PC-9 (cell line): ENCODE measurements at regions of chr22 and their contacts with region 1.

Region 1: GRCh38 chr22:41746567-41747400 is 47.5 kb downstream of the MEI1 start:
- DNase-seq: peak; percentile 75 to 88
- H3K4me3 ChIP-seq: no peak overlapping the region
- H3K27ac ChIP-seq: no peak overlapping the region
- H3K4me1 ChIP-seq: no peaks in the 10 kb centered on the region
- H3K27me3 ChIP-seq: no peaks in the 10 kb centered on the region
- CTCF ChIP-seq: peak; percentile 91

Region 2: GRCh38 chr22:41302021-41302767 is 444.6 kb before region 1 on chr22:
- CTCF ChIA-PET with region 1: no interaction called
- POLR2A ChIA-PET with region 1: no interaction called
- intact Hi-C with region 1: no loop called
- DNase-seq: no peak
- H3K4me3 ChIP-seq: peak overlapping the region; percentile 99
- H3K27ac ChIP-seq: peak overlapping the region; percentile 1; the same call in 1 of the 2 replicates
- H3K4me1 ChIP-seq: peaks cover 37% of the 10 kb centered on the region
- H3K27me3 ChIP-seq: no peaks in the 10 kb centered on the region
- CTCF ChIP-seq: no peak

Region 3: DNA sequence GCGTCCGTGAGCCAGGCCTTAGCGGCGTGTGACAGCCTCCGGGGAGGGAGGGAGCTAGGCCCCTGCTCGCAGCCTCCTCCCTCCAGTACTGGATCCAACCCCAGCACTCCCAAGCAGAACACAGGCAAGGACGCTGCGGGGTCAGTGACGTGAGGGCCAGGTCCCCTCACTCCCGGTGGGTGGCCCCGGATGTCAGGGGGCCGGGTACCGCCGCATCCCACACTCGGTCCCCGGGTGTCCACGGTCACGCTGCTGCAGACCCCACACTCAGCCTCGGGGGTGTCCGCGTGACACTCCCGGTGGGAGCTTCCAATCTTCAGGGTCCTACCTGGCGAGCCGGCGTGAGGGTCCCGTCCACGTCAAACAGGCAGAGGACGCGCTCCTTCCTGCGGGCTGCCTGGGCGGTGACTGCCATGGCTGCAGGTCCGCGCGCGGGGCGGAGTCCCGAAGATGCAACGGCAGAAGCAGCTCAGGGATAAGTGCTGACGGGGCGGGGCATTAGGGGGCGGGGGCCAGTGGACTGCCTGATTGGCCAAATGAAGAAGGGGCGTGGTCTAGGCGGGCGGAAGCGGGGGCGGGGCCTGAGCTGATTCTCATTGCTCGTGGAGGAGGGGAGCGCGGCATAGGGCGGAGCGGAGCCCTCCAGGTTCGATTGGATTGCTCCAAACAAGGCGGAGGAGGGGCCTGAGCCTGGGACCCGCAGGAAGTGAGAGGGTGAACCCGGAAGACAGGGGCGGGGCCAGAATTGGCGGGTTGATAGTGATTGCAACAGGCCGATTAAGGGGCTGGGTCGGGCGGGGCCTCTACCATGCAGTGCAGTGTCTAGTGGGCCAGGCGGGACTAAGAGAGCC is 157.2 kb before region 1 on chr22 and contains the start of gene PMM1:
- CTCF ChIA-PET with region 1: interaction called, 4 read pairs
- POLR2A ChIA-PET with region 1: interaction called, 11 read pairs
- intact Hi-C with region 1: no loop called
- DNase-seq: peak; percentile 99 to 100
- H3K4me3 ChIP-seq: peak within 1 kb of the TSS; percentile 98
- H3K27ac ChIP-seq: peak within 1 kb of the TSS; percentile 37; the same call in 1 of the 2 replicates
- H3K4me1 ChIP-seq: peaks cover 18% of the 10 kb centered on the region
- H3K27me3 ChIP-seq: no peaks in the 10 kb centered on the region
- CTCF ChIP-seq: no peak
- total RNA-seq, gene PMM1: 49.3 and 53.1 TPM in 2 replicates

Region 4: GRCh38 chr22:41768430-41768829 is 21.6 kb after region 1 on chr22:
- CTCF ChIA-PET with region 1: interaction called, 10 read pairs
- POLR2A ChIA-PET with region 1: interaction called, 8 read pairs
- intact Hi-C with region 1: no loop called
- DNase-seq: peak; percentile 11 to 92
- H3K4me3 ChIP-seq: no peak overlapping the region
- H3K27ac ChIP-seq: peak overlapping the region; percentile 68
- H3K4me1 ChIP-seq: peaks cover 45% of the 10 kb centered on the region
- H3K27me3 ChIP-seq: no peaks in the 10 kb centered on the region
- CTCF ChIP-seq: no peak

Region 5: DNA sequence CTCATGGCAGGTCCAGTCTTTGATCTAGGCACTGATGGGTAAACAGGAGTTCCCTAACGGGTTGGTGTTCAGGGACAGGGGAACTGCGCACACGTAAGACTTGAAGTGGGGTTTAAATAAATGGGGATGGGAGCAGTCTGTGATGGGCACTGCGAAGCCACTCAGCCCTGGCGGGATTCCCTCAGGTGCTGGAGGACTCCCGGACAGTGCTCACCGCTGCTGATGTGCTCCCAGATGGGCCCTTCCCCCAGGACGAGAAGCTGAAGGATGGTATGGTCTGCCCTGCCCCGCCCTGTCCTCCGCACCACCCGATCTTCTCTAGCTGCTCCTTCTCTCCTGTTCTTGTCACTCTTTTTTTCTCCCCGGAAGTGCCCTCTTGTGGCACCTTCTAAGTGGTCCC is 63.2 kb after region 1 on chr22:
- CTCF ChIA-PET with region 1: interaction called, 11 read pairs
- POLR2A ChIA-PET with region 1: no interaction called
- intact Hi-C with region 1: no loop called
- DNase-seq: no peak
- H3K4me3 ChIP-seq: no peak overlapping the region
- H3K27ac ChIP-seq: no peak overlapping the region
- H3K4me1 ChIP-seq: no peaks in the 10 kb centered on the region; the same call in 1 of the 2 replicates
- H3K27me3 ChIP-seq: no peaks in the 10 kb centered on the region
- CTCF ChIP-seq: no peak

Region 6: GRCh38 chr22:41857155-41857859 is 110.5 kb after region 1 on chr22:
- CTCF ChIA-PET with region 1: interaction called, 4 read pairs
- POLR2A ChIA-PET with region 1: interaction called, 5 read pairs
- intact Hi-C with region 1: loop called (anchors 1 kb)
- DNase-seq: peak; percentile 67 to 97
- H3K4me3 ChIP-seq: no peak overlapping the region
- H3K27ac ChIP-seq: peak overlapping the region; percentile 76
- H3K4me1 ChIP-seq: peaks cover 51% of the 10 kb centered on the region
- H3K27me3 ChIP-seq: no peaks in the 10 kb centered on the region
- CTCF ChIP-seq: peak; percentile 97

Region 7: GRCh38 chr22:41902932-41903421 is 156.2 kb after region 1 on chr22:
- CTCF ChIA-PET with region 1: no interaction called
- POLR2A ChIA-PET with region 1: no interaction called
- intact Hi-C with region 1: no loop called
- DNase-seq: no peak
- H3K4me3 ChIP-seq: no peak overlapping the region
- H3K27ac ChIP-seq: no peak overlapping the region
- H3K4me1 ChIP-seq: no peaks in the 10 kb centered on the region
- H3K27me3 ChIP-seq: no peaks in the 10 kb centered on the region
- CTCF ChIP-seq: no peak